Psoas muscle (tissue), 8 donors: ENCODE measurements at regions of chr11 and their contacts with region 1.

Region 1: GRCh38 chr11:61161190-61162091 is at the start of gene VPS37C:
- DNase-seq: peak; percentile 88 to 94
- ATAC-seq: peak; percentile 97 to 98 (median 97)
- H3K4me3 ChIP-seq: peak within 1 kb of the TSS; percentile 90
- H3K27ac ChIP-seq: peak within 1 kb of the TSS; percentile 98
- H3K4me1 ChIP-seq: peaks cover 35% of the 10 kb centered on the region
- H3K27me3 ChIP-seq: no peaks in the 10 kb centered on the region
- CTCF ChIP-seq: peak; percentile 24
- total RNA-seq, gene VPS37C: 16.9 to 27.3 (median 23.5) TPM

Region 2: GRCh38 chr11:60841797-60842667 is 319.4 kb before region 1 on chr11 and contains the start of gene CCDC86:
- intact Hi-C with region 1: loop called in 1 of 2 experiments (anchors 10 kb)
- DNase-seq: peak; percentile 97 to 98
- ATAC-seq: peak; percentile 95 to 97 (median 96)
- H3K4me3 ChIP-seq: peak within 1 kb of the TSS; percentile 99
- H3K27ac ChIP-seq: peak within 1 kb of the TSS; percentile 90
- H3K4me1 ChIP-seq: peaks cover 28% of the 10 kb centered on the region
- H3K27me3 ChIP-seq: no peaks in the 10 kb centered on the region
- CTCF ChIP-seq: no peak
- total RNA-seq, gene CCDC86: 24.8 to 43.9 (median 30.1) TPM

Region 3: DNA sequence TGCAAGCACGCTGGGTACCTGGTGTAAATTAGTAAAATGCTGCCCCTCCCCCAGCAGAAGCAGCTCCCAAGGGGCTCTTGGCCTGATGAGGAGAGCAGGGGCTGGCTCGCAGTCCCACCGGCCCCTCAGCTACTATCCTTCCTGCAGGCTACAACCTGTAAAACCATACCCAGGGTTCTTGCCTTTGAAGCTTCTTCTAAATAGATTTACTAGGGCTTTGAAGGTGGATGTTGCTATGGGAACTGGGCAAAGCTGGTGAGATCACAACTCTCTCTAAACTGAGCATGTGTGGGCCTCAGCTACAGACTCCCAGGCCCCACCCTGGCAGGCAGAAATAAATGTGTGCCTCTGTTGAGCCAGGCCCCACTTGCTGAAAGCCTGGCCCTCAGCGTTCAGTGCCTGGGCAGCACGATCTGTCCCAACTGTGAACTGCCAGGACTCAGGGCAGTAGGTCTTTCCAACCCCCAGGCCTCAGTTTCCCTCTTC is 40.7 kb before region 1 on chr11:
- intact Hi-C with region 1: no loop called
- DNase-seq: no peak
- ATAC-seq: no peak
- H3K4me3 ChIP-seq: no peak overlapping the region
- H3K27ac ChIP-seq: no peak overlapping the region
- H3K4me1 ChIP-seq: no peaks in the 10 kb centered on the region
- H3K27me3 ChIP-seq: no peaks in the 10 kb centered on the region
- CTCF ChIP-seq: no peak